WTC11 (cell line): ENCODE measurements at regions of chr17 and their contacts with region 1.

Region 1: GRCh38 chr17:43324205-43324893 is 74.4 kb upstream of the ARL4D start:
- DNase-seq: peak; percentile 46
- ATAC-seq: peak; percentile 57
- H3K4me3 Mint-ChIP-seq: no peak overlapping the region
- H3K27ac Mint-ChIP-seq: peak overlapping the region; percentile 9; the same call in 1 of the 2 replicates
- H3K4me1 Mint-ChIP-seq: peaks cover 9% of the 10 kb centered on the region
- H3K27me3 Mint-ChIP-seq: peaks cover 5% of the 10 kb centered on the region; the same call in 1 of the 2 replicates
- CTCF ChIP-seq: peak; percentile 28; the same call in 1 of the 2 replicates

Region 2: GRCh38 chr17:43334738-43335402 is 10.5 kb after region 1 on chr17:
- CTCF ChIA-PET with region 1: interaction called, 12 read pairs
- POLR2A ChIA-PET with region 1: no interaction called
- DNase-seq: no peak
- ATAC-seq: no peak
- H3K4me3 Mint-ChIP-seq: no peak overlapping the region
- H3K27ac Mint-ChIP-seq: peak overlapping the region; percentile 54; the same call in 1 of the 2 replicates
- H3K4me1 Mint-ChIP-seq: peaks cover 23% of the 10 kb centered on the region
- H3K27me3 Mint-ChIP-seq: no peaks in the 10 kb centered on the region
- CTCF ChIP-seq: no peak